Endothelial cell of umbilical vein (primary cell): ENCODE measurements at regions of chr10 and their contacts with region 1.

Region 1: DNA sequence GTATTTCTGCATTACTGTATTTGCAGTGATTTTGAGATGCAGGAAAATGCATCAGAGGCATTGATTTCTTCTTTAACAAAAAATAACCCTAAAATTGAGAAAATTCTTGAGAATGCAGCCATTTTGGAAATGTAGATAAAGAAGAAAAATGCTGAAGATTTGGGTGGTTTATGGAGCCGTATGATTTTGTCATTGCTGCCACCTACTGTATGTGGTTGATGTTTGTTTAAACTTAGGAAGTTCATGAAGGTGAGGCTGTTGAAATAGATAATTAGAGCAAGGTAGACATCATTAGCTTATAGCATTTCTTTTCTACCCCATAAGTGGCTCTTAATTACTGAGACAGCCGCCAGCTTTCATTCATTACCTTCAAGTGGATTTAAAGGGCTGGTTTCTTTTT is 92.1 kb upstream of the SAMD8 start:
- DNase-seq: peak; percentile 42
- H3K4me3 ChIP-seq: no peak overlapping the region
- H3K27ac ChIP-seq: no peak overlapping the region
- H3K4me1 ChIP-seq: no peaks in the 10 kb centered on the region
- H3K27me3 ChIP-seq: no peaks in the 10 kb centered on the region
- CTCF ChIP-seq: peak in 1 of 2 donors; percentile 6
- POLR2A ChIP-seq: no peak

Region 2: DNA sequence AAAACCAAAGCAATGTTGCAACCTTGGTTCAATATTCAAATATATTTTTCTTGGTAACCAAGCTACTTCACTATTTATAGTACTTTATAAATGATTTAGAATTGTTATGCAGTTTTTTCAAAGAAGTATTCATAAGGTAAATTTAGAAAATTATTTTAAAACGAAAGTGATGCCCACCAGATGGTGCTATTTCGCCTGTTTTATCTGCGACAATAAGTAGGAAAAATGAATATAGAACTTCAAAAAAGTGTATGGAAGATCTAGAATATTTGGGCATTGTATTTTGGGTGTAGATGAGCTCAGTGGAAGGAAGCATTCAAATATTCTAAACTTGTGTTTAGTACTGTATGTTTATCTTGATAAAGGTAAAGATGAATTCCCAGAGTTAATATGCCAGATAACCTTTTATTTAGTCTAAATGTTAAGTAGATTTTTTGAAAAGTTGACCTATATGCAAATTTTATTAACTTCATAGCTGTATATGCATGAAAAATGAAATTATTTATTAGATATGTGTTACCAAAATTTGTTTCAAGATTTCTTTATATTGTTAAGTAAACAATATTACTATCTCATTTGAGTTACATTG is 775.2 kb before region 1 on chr10:
- CTCF ChIA-PET with region 1: interaction called, 42 read pairs
- POLR2A ChIA-PET with region 1: no interaction called
- dilution Hi-C with region 1: no loop called
- intact Hi-C with region 1: loop called (anchors 1 kb)
- DNase-seq: peak; percentile 75
- H3K4me3 ChIP-seq: no peak overlapping the region
- H3K27ac ChIP-seq: no peak overlapping the region
- H3K4me1 ChIP-seq: peaks cover 3% of the 10 kb centered on the region
- H3K27me3 ChIP-seq: no peaks in the 10 kb centered on the region
- CTCF ChIP-seq: peak; percentile 7 to 26
- POLR2A ChIP-seq: no peak

Region 3: GRCh38 chr10:74262856-74263255 is 756.5 kb before region 1 on chr10:
- CTCF ChIA-PET with region 1: interaction called, 13 read pairs
- POLR2A ChIA-PET with region 1: no interaction called
- dilution Hi-C with region 1: no loop called
- intact Hi-C with region 1: loop called (anchors 1 kb)
- DNase-seq: no peak
- H3K4me3 ChIP-seq: no peak overlapping the region
- H3K27ac ChIP-seq: no peak overlapping the region
- H3K4me1 ChIP-seq: peaks cover 2% of the 10 kb centered on the region
- H3K27me3 ChIP-seq: no peaks in the 10 kb centered on the region
- CTCF ChIP-seq: no peak
- POLR2A ChIP-seq: no peak

Region 4: GRCh38 chr10:74419958-74420375 is 599.4 kb before region 1 on chr10:
- CTCF ChIA-PET with region 1: interaction called, 10 read pairs
- POLR2A ChIA-PET with region 1: no interaction called
- dilution Hi-C with region 1: no loop called
- intact Hi-C with region 1: loop called (anchors 5 kb)
- DNase-seq: peak; percentile 49
- H3K4me3 ChIP-seq: no peak overlapping the region
- H3K27ac ChIP-seq: no peak overlapping the region
- H3K4me1 ChIP-seq: no peaks in the 10 kb centered on the region
- H3K27me3 ChIP-seq: no peaks in the 10 kb centered on the region
- CTCF ChIP-seq: peak in 1 of 2 donors; percentile 23
- POLR2A ChIP-seq: no peak

Region 5: GRCh38 chr10:74738985-74739567 is 280.3 kb before region 1 on chr10:
- CTCF ChIA-PET with region 1: interaction called, 27 read pairs
- POLR2A ChIA-PET with region 1: no interaction called
- dilution Hi-C with region 1: no loop called
- intact Hi-C with region 1: loop called (anchors 2 kb)
- DNase-seq: peak; percentile 57
- H3K4me3 ChIP-seq: no peak overlapping the region
- H3K27ac ChIP-seq: no peak overlapping the region
- H3K4me1 ChIP-seq: peaks cover 9% of the 10 kb centered on the region
- H3K27me3 ChIP-seq: no peaks in the 10 kb centered on the region
- CTCF ChIP-seq: peak; percentile 7 to 27
- POLR2A ChIP-seq: no peak